ENCODE measurements at regions of chr17 and their contacts with region 1.

Region 1: GRCh38 chr17:7004398-7005253 is 7.8 kb upstream of the RNASEK start:
- DNase-seq: peak; percentile 47
- H3K4me3 ChIP-seq: no peak overlapping the region
- H3K27ac ChIP-seq: no peak overlapping the region
- H3K4me1 ChIP-seq: no peaks in the 10 kb centered on the region
- H3K27me3 ChIP-seq: no peaks in the 10 kb centered on the region
- CTCF ChIP-seq: peak; percentile 39 to 71 (median 66)
- POLR2A ChIP-seq: no peak

Region 2: DNA sequence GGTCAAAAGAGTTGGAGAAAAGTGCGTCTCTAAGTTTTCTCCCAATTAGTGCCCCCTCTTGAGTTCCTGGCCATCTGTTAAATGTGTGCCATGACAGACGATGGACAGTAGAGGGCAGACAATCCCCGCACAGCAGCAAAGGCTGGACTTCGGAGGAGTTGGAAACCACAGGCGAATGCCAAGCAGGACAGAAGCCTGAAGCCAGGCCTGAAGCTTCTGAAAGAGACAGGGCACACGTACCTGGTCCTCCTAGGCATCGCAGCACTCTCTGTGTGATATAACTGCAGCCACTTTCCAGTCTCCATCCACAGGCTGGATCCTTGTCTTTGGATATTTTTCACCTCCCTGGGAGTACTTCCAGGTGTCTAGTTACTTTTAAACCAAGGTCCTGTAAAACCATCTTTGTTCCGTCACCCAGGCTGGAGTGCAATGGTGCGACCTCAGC is 338.5 kb before region 1 on chr17:
- intact Hi-C with region 1: loop called (anchors 5 kb)
- DNase-seq: peak; percentile 61
- H3K4me3 ChIP-seq: no peak overlapping the region
- H3K27ac ChIP-seq: no peak overlapping the region
- H3K4me1 ChIP-seq: no peaks in the 10 kb centered on the region
- H3K27me3 ChIP-seq: no peaks in the 10 kb centered on the region
- CTCF ChIP-seq: peak; percentile 57 to 89 (median 78)
- POLR2A ChIP-seq: no peak

Region 3: DNA sequence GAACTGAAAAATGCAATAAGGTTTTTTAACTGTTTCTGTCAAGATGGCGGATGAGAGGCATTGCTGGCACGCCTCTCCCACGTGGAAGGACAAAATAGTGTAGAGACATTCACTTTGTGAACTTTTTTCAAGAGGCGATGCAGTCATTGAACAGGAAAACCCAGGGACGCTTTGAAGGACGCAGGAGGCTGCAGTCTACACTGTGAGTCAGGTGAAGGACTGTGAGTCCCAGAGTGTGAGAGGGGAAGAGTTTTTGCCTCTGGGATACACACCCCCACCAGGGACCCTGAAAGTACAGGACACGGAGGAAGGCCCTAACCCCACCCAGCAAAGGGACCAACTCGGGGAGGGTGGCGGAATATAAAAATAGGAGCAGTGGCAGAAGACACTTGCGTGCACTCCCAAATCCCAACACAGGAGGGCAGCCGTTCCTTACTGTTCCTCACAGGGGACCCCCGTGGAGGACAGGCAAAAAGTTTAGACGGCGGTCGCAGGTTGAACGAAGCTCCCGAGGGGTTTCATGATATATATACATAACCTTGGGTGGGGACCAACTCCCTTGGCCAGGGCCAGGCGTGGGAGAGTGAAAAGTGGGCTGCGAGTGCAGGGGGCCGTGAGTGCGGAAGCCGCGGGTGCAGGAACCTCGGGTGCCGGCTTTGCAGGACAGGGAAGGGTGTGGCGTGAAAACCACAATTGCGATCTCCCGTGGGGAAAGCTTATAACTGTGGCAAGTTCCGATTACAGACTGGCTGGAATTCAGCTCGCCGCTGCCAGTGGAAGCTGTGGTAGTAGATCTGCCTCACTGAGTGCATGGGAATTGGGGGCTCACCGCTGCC is 90.8 kb before region 1 on chr17:
- intact Hi-C with region 1: loop called (anchors 5 kb)
- DNase-seq: peak; percentile 46
- H3K4me3 ChIP-seq: no peak overlapping the region
- H3K27ac ChIP-seq: no peak overlapping the region
- H3K4me1 ChIP-seq: no peaks in the 10 kb centered on the region
- H3K27me3 ChIP-seq: no peaks in the 10 kb centered on the region
- CTCF ChIP-seq: peak; percentile 31 to 75 (median 64)
- POLR2A ChIP-seq: no peak

Region 4: DNA sequence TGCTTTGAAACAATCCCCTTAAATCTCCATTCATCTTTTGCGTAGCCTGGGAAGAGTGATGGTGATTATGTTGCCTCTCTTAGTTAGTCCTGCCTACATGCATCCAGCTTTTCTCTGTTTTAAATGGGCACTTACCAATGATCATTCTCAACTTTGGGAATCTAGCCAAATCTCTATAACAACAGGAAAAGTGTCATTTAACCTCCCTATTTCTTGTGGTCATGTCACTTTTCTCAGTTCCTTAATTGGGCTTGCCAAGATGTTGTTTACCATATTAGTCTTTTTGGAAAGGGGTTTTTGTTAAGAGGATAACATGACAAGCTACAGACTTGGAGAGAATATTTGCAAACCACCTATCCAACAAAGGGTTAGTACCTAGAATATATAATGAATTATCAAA is 91.0 kb after region 1 on chr17:
- intact Hi-C with region 1: no loop called
- DNase-seq: no peak
- H3K4me3 ChIP-seq: no peak overlapping the region
- H3K27ac ChIP-seq: no peak overlapping the region
- H3K4me1 ChIP-seq: no peaks in the 10 kb centered on the region
- H3K27me3 ChIP-seq: no peaks in the 10 kb centered on the region
- CTCF ChIP-seq: no peak
- POLR2A ChIP-seq: no peak

Region 5: GRCh38 chr17:7306911-7307686 is 302.5 kb after region 1 on chr17 and contains the start of gene EIF5A:
- intact Hi-C with region 1: no loop called
- DNase-seq: peak; percentile 99
- H3K4me3 ChIP-seq: peak within 1 kb of the TSS; percentile 99
- H3K27ac ChIP-seq: peak within 1 kb of the TSS; percentile 97 to 99
- H3K4me1 ChIP-seq: peaks cover 8% of the 10 kb centered on the region
- H3K27me3 ChIP-seq: no peaks in the 10 kb centered on the region
- CTCF ChIP-seq: peak in 1 of 4 experiments; percentile 23
- POLR2A ChIP-seq: peak; percentile 94
- total RNA-seq, gene EIF5A: 172 to 195 TPM

Measured in prostate gland (tissue), 2 donors.